ENCODE measurements at regions of chr6 and their contacts with region 1.

Region 1: DNA sequence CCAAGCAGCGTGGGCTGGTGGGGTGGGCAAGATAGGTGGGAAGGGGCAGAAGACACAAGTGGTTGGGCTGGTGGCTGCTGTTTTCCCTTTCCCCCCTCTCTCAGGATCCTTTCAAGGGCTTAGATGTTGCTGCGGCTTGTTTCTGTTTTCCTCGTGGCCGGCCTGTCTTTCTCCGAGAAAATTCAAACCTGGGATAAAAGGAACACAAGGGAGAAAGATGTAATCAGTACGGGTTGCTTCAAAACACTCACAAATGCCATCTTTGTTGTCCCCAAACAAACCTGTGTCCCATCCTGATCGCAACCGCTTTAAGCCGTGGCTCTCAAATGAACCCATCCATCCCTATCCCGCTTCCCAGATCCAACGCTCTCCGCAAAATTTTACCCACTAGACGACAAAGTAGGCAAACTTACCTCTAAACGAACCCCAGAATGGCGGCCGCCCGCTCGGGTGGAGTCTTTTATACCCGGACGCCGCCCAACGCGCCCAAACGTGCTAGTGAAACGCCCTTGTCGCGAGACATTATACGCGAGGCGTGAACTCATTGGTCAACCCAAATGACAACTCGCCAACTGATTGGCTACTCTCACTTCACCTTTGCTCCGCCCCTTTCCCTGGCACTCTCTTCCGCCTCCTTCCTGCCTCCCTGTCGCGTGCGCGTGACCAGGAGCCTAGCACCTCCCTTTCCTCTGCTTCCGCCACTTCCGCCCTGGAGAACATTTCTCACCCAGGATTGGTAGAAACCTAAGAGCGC is at the start of gene PPP1R10:
- DNase-seq: peak; percentile 99
- total RNA-seq, gene PPP1R10: 30.0 TPM

Region 2: GRCh38 chr6:30556066-30556905 is 60.7 kb before region 1 on chr6 and contains the start of gene GNL1:
- intact Hi-C with region 1: loop called (anchors 5 kb)
- DNase-seq: peak; percentile 98
- total RNA-seq, gene GNL1: 19.6 TPM

Region 3: GRCh38 chr6:30686908-30687658 is 70.1 kb after region 1 on chr6:
- intact Hi-C with region 1: loop called (anchors 5 kb)
- DNase-seq: peak; percentile 99